ENCODE measurements at regions of chrX and their contacts with region 1.

Region 1: GRCh38 chrX:154397819-154398724 is at the start of gene RPL10:
- DNase-seq: peak; percentile 76 to 96 (median 86)
- ATAC-seq: peak; percentile 83
- H3K4me3 ChIP-seq: peak within 1 kb of the TSS; percentile 72
- H3K4me3 Mint-ChIP-seq: peak within 1 kb of the TSS; percentile 98
- H3K27ac ChIP-seq: peak within 1 kb of the TSS; percentile 88 to 99
- H3K27ac Mint-ChIP-seq: peak within 1 kb of the TSS; percentile 99
- H3K4me1 ChIP-seq: peaks cover 27% of the 10 kb centered on the region
- H3K4me1 Mint-ChIP-seq: peaks cover 22% of the 10 kb centered on the region
- H3K27me3 ChIP-seq: no peaks in the 10 kb centered on the region
- H3K27me3 Mint-ChIP-seq: no peaks in the 10 kb centered on the region
- CTCF ChIP-seq: no peak
- total RNA-seq, gene RPL10: 5,036 to 5,204 TPM

Region 2: GRCh38 chrX:154370882-154371770 is 26.9 kb before region 1 on chrX:
- CTCF ChIA-PET with region 1: interaction called, 3 read pairs
- POLR2A ChIA-PET with region 1: interaction called, 34 read pairs
- intact Hi-C with region 1: no loop called
- DNase-seq: peak; percentile 84 to 96 (median 90)
- ATAC-seq: peak; percentile 65
- H3K4me3 ChIP-seq: peak overlapping the region; percentile 77
- H3K4me3 Mint-ChIP-seq: peak overlapping the region; percentile 96
- H3K27ac ChIP-seq: peak overlapping the region in 1 of 2 donors; percentile 96
- H3K27ac Mint-ChIP-seq: peak overlapping the region; percentile 80
- H3K4me1 ChIP-seq: peaks cover 59% of the 10 kb centered on the region
- H3K4me1 Mint-ChIP-seq: peaks cover 22% of the 10 kb centered on the region
- H3K27me3 ChIP-seq: no peaks in the 10 kb centered on the region
- H3K27me3 Mint-ChIP-seq: no peaks in the 10 kb centered on the region
- CTCF ChIP-seq: no peak

Region 3: DNA sequence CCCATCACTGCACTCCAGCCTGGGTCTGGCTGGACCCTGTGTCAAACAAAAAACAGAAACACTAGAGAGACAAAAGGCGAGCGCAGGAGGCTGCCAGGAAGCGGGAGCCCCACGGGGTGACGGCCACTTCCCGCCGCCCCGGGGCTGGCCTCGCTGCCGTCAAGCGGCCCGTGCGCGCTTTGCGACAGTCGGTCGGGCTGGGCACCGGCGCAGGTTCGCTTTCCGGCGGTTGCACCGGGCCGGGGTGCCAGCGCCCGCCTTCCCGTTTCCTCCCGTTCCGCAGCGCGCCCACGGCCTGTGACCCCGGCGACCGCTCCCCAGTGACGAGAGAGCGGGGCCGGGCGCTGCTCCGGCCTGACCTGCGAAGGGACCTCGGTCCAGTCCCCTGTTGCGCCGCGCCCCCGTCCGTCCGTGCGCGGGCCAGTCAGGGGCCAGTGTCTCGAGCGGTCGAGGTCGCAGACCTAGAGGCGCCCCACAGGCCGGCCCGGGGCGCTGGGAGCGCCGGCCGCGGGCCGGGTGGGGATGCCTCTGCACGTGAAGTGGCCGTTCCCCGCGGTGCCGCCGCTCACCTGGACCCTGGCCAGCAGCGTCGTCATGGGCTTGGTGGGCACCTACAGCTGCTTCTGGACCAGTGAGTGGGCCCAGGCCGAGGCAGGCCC is 13.4 kb after region 1 on chrX and contains the start of gene TAFAZZIN:
- CTCF ChIA-PET with region 1: interaction called, 15 read pairs
- POLR2A ChIA-PET with region 1: interaction called, 40 read pairs
- intact Hi-C with region 1: no loop called
- DNase-seq: peak; percentile 39 to 88 (median 68)
- ATAC-seq: peak; percentile 79
- H3K4me3 ChIP-seq: peak within 1 kb of the TSS; percentile 63
- H3K4me3 Mint-ChIP-seq: peak within 1 kb of the TSS; percentile 99
- H3K27ac ChIP-seq: peak within 1 kb of the TSS; percentile 52 to 74
- H3K27ac Mint-ChIP-seq: peak within 1 kb of the TSS; percentile 95
- H3K4me1 ChIP-seq: peaks cover 21% of the 10 kb centered on the region
- H3K4me1 Mint-ChIP-seq: peaks cover 17% of the 10 kb centered on the region
- H3K27me3 ChIP-seq: no peaks in the 10 kb centered on the region
- H3K27me3 Mint-ChIP-seq: no peaks in the 10 kb centered on the region
- CTCF ChIP-seq: no peak
- total RNA-seq, gene TAFAZZIN: 72.8 to 78.5 TPM

Region 4: DNA sequence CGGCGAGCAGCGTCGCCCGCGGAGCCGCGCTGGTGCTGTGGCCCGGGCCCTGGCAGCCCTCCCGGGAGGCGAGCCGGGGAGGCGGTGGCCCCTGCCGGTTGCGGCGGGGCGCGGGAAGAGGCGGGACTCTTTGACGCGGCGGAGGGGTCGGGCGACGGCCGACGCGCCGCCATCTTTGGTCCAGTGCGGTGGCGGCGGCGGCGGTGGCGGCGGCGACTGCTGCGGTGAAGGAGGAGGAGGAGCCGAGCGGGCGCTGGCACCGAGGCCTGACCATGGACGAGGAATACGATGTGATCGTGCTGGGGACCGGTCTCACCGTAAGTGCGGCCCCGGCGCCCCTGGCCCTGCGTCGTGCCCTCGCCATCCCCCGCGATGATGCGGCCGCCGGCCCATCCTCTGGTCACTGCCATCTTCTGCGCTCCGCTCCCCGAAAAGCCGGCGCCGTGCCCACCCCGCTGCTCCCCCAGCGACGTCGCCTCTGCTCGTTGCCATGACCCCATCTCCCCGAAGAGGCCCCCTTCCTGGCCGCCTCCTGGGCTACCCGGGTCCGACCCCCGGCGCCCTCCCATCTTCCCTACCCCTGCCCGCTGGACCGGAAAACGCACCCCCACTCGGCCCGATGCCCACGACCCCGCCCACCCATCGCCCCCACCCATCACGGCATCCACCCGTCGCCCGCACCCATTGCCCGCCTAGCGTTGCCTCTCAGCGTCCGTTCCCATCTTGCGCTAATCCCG is 39.1 kb after region 1 on chrX and contains the start of gene GDI1:
- CTCF ChIA-PET with region 1: no interaction called
- POLR2A ChIA-PET with region 1: interaction called, 10 read pairs
- intact Hi-C with region 1: no loop called
- DNase-seq: peak; percentile 30 to 81 (median 50)
- ATAC-seq: peak; percentile 54
- H3K4me3 ChIP-seq: peak within 1 kb of the TSS; percentile 59
- H3K4me3 Mint-ChIP-seq: peak within 1 kb of the TSS; percentile 90
- H3K27ac ChIP-seq: peak within 1 kb of the TSS; percentile 64 to 72
- H3K27ac Mint-ChIP-seq: peak within 1 kb of the TSS; percentile 93
- H3K4me1 ChIP-seq: peaks cover 45% of the 10 kb centered on the region
- H3K4me1 Mint-ChIP-seq: peaks cover 12% of the 10 kb centered on the region
- H3K27me3 ChIP-seq: no peaks in the 10 kb centered on the region
- H3K27me3 Mint-ChIP-seq: no peaks in the 10 kb centered on the region
- CTCF ChIP-seq: no peak
- total RNA-seq, gene GDI1: 144 to 145 TPM

Region 5: GRCh38 chrX:154526901-154527675 is 129.0 kb after region 1 on chrX:
- CTCF ChIA-PET with region 1: interaction called, 3 read pairs
- POLR2A ChIA-PET with region 1: interaction called, 14 read pairs
- intact Hi-C with region 1: loop called (anchors 5 kb)
- DNase-seq: peak; percentile 36 to 77 (median 54)
- ATAC-seq: peak; percentile 93
- H3K4me3 ChIP-seq: peak overlapping the region; percentile 5
- H3K4me3 Mint-ChIP-seq: no peak overlapping the region
- H3K27ac ChIP-seq: no peak overlapping the region
- H3K27ac Mint-ChIP-seq: peak overlapping the region; percentile 51
- H3K4me1 ChIP-seq: peaks cover 24% of the 10 kb centered on the region
- H3K4me1 Mint-ChIP-seq: peaks cover 22% of the 10 kb centered on the region
- H3K27me3 ChIP-seq: no peaks in the 10 kb centered on the region
- H3K27me3 Mint-ChIP-seq: no peaks in the 10 kb centered on the region
- CTCF ChIP-seq: no peak

Measured in CD4-positive, alpha-beta T cell (primary cell).